Cardiac septum (tissue), 1 donor: ENCODE measurements at regions of chr17 and their contacts with region 1.

Region 1: GRCh38 chr17:5438716-5439445 is at the start of gene C1QBP:
- DNase-seq: peak; percentile 95
- total RNA-seq, gene C1QBP: 101 TPM

Region 2: DNA sequence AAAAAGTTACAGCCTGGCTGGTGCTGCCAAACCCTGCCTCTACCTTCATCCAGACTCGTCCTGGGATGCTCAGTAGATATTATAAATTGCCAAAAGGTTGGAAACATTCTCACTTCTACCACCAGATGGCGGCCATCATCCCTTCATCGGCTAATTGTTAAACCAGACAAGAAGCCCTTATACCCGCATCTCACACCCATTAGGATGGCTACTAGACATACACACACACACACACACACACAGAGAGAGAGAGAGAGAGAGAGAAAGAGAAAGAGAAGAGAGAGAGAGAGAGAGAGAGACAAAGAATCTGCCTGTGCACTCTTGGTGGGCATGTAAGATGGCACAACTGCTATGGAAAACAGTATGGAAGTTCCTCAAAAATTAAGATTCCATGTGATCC is 189.3 kb before region 1 on chr17:
- intact Hi-C with region 1: loop called (anchors 10 kb)
- DNase-seq: no peak

Region 3: DNA sequence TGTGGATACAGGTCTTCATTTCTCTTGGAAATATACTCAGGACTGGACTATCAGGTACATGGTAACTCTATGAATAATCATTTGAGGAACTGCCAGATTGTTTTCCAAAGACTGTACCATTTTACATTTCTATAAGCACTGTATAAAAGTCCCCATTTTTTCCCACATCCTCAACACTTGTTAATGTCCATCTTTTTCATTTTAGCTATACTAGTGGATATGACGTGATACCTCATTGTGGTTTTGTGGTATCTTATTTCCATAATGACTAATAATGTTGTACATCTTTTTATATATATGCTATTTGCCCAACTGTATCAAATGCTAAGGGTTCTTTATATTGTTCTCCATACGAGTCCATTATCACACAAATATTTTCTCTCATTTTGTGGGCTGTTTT is 42.3 kb before region 1 on chr17:
- intact Hi-C with region 1: no loop called
- DNase-seq: no peak

Region 4: DNA sequence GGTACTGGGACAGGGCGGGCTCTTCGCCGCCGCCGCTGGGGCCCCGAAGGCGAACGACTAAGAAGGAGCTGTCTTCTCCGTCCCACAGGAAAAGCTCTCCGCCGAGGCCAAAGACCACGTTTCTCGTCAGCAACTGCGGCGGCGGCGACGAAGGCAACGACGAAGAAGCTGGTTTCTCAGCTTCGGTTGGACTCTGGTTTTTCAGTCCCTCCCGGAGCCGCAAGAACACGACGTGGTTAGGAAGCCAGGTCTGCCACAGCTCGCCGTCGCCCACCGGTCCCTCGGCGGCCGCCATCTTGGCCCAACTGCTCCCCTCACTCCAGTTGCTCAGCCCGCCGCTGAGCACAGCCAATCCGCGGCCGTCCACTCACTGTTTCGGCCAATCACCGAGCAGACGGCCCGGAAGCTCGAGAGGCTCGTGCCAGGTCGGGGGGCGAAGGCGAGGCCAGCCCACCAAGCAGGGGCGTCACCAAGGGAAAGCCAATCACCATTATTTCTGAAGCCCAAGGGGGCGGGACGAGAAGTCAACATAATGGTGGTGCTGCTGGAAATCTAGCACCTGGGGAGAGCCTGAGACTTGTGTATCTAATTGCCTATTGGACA is 19.4 kb before region 1 on chr17 and contains the start of gene NUP88:
- intact Hi-C with region 1: loop called (anchors 1 kb)
- DNase-seq: peak; percentile 98
- total RNA-seq, gene NUP88: 45.1 TPM

Region 5: DNA sequence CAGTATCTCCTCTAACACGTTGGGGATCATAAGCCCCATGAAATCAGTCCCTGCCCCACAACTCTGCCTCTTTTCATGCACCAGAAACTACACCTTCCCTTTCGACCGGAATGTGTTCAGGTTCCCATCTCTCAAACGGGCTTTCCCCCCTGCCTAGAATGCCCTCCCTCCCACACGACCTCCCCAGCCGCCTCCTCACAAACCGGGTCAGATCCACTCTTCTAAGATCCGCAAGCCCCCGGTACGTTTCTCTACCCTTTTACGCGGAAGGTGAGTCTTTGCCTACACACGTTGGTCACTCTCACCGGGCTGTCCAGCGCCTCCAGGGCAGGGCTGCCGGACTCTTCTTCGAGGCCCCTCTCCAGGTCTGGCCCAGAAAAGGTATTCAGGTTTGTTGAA is 29.2 kb after region 1 on chr17:
- intact Hi-C with region 1: loop called (anchors 1 kb)
- DNase-seq: no peak